Colonic mucosa (tissue), 4 donors: ENCODE measurements at regions of chr4 and their contacts with region 1.

Region 1: DNA sequence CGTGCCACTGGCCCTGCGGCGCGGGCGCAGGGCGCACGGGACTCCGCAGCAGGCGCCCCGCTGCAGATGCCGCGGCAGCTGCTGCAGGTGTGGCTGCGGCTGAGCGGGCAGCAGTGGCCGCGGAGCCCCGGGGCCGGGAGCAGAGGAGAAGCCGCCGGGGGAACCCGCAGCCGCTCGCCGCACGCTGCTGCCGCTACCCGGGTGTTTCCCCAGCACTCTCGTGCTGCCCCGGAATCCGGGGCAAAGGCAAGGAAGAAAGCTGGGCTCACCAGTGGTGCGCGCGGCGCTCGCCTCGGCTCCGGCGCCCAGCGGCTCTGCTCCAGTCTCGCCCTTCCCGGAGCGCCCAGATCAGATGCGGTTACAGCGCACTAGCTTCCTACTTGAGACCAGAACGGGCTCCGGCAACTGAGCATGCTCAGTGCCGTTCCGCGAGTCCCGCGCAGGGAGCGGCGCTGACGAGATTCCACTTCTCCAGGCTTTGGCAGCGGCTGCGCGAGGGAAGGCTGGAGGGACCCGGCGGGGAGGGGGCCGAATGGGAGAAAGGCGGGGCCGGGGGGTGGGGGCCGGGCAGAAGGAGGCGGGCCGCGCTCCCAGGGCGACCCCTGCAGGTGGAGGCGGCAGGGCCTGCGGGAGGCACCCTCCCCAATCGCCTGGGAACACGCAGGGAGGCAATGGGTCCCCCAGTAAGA is at the start of gene APBB2:
- DNase-seq: peak; percentile 93
- H3K4me3 ChIP-seq: peak within 1 kb of the TSS; percentile 63
- H3K27ac ChIP-seq: peak within 1 kb of the TSS; percentile 90
- H3K4me1 ChIP-seq: peaks cover 4% of the 10 kb centered on the region
- H3K27me3 ChIP-seq: no peaks in the 10 kb centered on the region
- CTCF ChIP-seq: peak; percentile 69
- total RNA-seq, gene APBB2: 22.8 to 27.5 TPM

Region 2: GRCh38 chr4:40927074-40927473 is 287.2 kb before region 1 on chr4:
- intact Hi-C with region 1: loop called (anchors 2 kb)
- DNase-seq: no peak
- H3K4me3 ChIP-seq: no peak overlapping the region
- H3K27ac ChIP-seq: no peak overlapping the region
- H3K4me1 ChIP-seq: no peaks in the 10 kb centered on the region
- H3K27me3 ChIP-seq: no peaks in the 10 kb centered on the region
- CTCF ChIP-seq: no peak

Region 3: DNA sequence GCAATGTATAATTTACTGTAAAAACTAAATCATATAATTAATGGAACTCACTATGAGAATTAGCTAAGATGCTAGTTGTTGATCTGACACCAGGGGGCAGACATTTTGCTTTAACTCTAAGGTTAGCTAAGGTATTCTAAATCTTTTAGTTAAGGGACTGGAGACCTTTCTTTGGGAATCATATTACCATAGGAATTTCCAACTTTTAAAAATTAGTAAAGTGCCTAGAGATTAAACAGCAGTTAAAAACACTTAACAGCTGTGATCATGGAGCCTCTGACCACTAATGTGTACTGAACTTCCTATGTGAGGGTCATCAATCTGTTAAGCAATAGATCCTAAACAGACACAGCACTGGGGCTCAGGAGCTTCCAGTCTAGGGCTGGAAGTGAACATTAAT is 237.9 kb before region 1 on chr4:
- intact Hi-C with region 1: loop called (anchors 5 kb)
- DNase-seq: peak; percentile 58
- H3K4me3 ChIP-seq: no peak overlapping the region
- H3K27ac ChIP-seq: no peak overlapping the region
- H3K4me1 ChIP-seq: no peaks in the 10 kb centered on the region
- H3K27me3 ChIP-seq: no peaks in the 10 kb centered on the region
- CTCF ChIP-seq: peak; percentile 67

Region 4: DNA sequence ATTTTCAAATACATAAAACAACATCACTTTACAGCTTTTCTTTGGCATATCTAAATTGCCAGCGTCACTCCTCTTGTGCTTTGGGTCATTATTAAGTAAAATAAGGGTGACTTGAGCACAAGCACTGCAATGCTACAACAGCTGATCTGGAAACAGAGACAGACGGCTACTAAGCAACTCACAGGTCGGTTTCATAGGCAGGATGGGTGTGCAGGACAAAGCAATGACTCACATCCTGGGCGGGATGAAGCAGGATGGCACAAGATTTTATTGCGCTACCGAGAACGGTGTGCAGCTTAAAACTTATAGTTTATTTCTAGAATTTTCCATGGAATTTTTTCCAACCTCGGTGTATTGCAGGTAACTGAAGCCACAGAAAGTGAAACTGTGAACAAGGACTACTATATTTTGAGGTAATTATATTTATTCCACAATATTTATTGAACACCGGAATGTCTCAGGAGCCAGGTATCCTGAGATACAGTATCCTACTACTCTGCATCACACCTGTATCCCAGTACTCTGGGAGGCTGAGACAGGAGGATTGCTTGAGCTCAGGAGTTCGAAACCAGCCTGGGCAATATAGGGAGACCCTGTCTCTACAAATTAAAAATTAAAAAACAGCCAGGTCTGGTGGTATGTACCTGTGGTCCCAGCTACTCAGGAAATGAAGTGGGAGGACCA is 215.5 kb before region 1 on chr4:
- intact Hi-C with region 1: no loop called
- DNase-seq: no peak
- H3K4me3 ChIP-seq: no peak overlapping the region
- H3K27ac ChIP-seq: no peak overlapping the region
- H3K4me1 ChIP-seq: no peaks in the 10 kb centered on the region
- H3K27me3 ChIP-seq: no peaks in the 10 kb centered on the region
- CTCF ChIP-seq: no peak

Region 5: DNA sequence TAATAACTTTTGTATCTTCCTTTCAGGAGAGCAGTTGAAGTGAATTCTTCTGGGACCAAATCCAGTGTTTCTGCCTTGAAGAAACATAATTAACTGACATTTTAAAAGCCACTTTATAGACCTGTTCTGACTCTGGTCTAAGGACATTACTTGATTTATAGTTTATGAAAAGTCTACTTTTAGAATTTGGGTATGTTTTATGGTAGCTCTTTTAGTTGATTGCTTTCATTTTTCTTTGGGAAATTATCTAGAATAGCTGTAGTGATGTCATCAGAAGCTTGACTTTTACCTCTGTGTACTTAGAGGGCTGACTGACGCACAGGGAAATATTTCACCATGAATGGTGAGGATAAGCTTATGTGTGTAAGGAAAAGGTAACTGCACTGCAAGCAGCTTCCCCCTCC is 191.8 kb after region 1 on chr4:
- intact Hi-C with region 1: no loop called
- DNase-seq: no peak
- H3K4me3 ChIP-seq: no peak overlapping the region
- H3K27ac ChIP-seq: no peak overlapping the region
- H3K4me1 ChIP-seq: no peaks in the 10 kb centered on the region
- H3K27me3 ChIP-seq: no peaks in the 10 kb centered on the region
- CTCF ChIP-seq: no peak

Region 6: DNA sequence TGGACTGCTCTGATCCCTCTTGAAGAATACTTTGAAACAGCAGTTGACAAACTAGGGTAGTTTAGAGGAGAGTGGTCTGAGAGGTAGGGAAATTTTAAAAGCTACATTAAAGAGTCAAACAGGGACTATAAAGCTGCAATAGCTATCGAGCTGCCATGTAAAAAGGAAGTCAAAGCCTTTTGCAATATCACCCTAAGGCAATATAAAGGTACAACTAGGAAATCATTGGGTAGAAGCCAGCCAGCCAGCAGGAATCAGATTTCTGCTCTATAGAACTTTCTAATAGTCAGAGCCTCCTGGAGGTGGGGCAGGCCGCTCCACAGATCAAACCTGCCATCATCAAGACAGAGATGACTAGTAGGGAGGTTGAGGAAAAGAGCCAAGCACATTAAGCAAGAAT is 549.4 kb after region 1 on chr4:
- intact Hi-C with region 1: no loop called
- DNase-seq: no peak
- H3K4me3 ChIP-seq: no peak overlapping the region
- H3K27ac ChIP-seq: no peak overlapping the region
- H3K4me1 ChIP-seq: no peaks in the 10 kb centered on the region
- H3K27me3 ChIP-seq: no peaks in the 10 kb centered on the region
- CTCF ChIP-seq: no peak